Mammary epithelial cell (primary cell): ENCODE measurements at regions of chr14 and their contacts with region 1.

Region 1: DNA sequence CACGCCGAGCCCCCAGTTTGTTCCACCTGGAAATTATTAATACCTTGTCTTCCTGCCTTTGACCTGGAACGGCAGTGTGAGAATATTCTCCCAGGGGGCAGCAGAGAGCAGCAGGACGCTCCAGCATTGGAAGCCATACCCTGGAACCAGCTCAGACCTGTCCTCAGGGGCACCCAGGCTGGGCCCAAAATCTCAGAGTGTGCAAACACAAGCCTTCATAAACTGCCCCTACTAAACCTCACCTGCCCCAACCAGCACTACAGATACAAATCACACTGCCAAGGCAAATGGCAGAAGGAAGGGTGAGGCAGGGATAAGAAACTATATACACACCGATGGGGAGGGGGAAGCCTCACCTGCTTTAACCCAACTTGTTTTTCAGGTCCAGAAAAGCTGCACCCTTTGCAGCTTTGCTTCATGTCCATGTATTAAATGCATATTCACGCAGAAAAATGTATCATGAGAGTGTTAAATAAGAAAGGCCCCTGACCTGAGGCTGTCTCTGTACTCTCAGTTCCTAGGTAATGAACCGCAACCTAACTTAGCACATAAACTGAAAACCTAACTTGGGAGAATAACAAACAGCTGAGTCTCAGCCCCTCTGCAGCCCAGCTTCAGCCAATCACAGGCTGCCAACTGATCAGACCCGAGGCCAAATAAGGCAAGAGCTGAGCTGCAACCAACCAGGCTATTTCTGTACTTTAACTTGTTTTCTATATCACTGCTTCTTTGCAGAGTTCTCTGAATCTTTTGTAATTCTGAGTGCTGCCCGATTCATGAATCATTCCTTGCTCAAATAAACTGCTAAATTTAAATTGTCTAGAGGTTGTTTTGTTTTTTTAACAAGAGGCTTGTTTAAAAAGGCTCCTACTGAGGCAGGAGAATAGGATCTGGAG is 130.1 kb downstream of the SPTSSA start:
- DNase-seq: peak; percentile 52
- H3K4me3 ChIP-seq: no peak overlapping the region
- H3K27ac ChIP-seq: no peak overlapping the region
- H3K4me1 ChIP-seq: peaks cover 6% of the 10 kb centered on the region
- H3K27me3 ChIP-seq: no peaks in the 10 kb centered on the region
- CTCF ChIP-seq: peak; percentile 80 to 89

Region 2: GRCh38 chr14:34461334-34462131 is 129.6 kb after region 1 on chr14:
- CTCF ChIA-PET with region 1: no interaction called
- dilution Hi-C with region 1: no loop called
- in situ Hi-C with region 1: no loop called
- intact Hi-C with region 1: loop called (anchors 1 kb)
- DNase-seq: peak; percentile 42
- H3K4me3 ChIP-seq: peak overlapping the region; percentile 72 to 77 (median 76)
- H3K27ac ChIP-seq: peak overlapping the region; percentile 77
- H3K4me1 ChIP-seq: peaks cover 8% of the 10 kb centered on the region
- H3K27me3 ChIP-seq: no peaks in the 10 kb centered on the region
- CTCF ChIP-seq: no peak

Region 3: DNA sequence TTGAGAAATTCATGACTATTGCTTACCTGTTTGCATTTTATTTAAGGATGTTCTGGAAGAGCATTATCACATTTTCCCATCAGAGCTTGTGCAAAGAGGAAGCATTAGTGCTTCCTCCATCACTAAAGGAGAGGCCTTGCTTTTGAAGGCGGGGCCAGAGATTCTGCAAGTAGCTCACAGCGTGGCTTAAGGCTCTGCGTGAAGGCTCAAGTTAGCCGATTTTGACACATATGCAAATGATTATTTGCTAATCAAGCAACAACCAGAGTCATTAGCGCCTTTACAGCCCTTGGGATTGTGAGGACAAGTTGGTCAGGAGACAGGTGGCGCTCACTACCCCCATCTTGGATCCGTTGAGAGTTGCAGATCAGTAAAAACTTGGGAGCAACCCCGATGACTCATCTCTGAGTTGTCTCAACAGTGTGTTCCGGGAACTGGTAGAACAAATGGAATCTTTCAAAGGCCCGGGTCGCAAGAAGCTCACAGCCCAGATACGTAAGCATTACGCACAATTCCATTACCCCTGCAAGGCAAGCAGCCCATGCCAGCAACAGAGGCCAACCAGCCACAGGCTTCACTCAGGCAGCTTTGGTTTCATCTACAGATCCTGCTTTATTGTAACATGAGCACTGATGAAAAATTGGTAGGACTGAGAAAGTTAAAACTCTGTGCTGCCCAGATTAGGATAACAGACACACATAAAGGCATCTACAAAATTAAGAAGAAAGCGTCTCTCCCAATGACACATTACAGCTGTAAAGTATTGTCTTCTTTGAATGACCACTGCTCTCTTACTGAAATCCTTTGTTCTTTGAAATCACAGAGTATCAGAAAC is 164.9 kb after region 1 on chr14:
- CTCF ChIA-PET with region 1: interaction called, 7 read pairs
- dilution Hi-C with region 1: no loop called
- in situ Hi-C with region 1: loop called (anchors 5 to 25 kb)
- intact Hi-C with region 1: loop called (anchors 1 kb)
- DNase-seq: peak; percentile 98
- H3K4me3 ChIP-seq: no peak overlapping the region
- H3K27ac ChIP-seq: peak overlapping the region; percentile 89
- H3K4me1 ChIP-seq: peaks cover 18% of the 10 kb centered on the region
- H3K27me3 ChIP-seq: no peaks in the 10 kb centered on the region
- CTCF ChIP-seq: peak; percentile 3 to 46

Region 4: GRCh38 chr14:34502494-34503225 is 170.7 kb after region 1 on chr14:
- CTCF ChIA-PET with region 1: interaction called, 6 read pairs
- dilution Hi-C with region 1: no loop called
- in situ Hi-C with region 1: loop called (anchors 5 to 25 kb)
- intact Hi-C with region 1: loop called (anchors 1 kb)
- DNase-seq: no peak
- H3K4me3 ChIP-seq: no peak overlapping the region
- H3K27ac ChIP-seq: no peak overlapping the region
- H3K4me1 ChIP-seq: peaks cover 2% of the 10 kb centered on the region
- H3K27me3 ChIP-seq: no peaks in the 10 kb centered on the region
- CTCF ChIP-seq: no peak

Region 5: GRCh38 chr14:34539407-34540180 is 207.6 kb after region 1 on chr14 and contains the start of gene EAPP:
- CTCF ChIA-PET with region 1: no interaction called
- dilution Hi-C with region 1: no loop called
- in situ Hi-C with region 1: no loop called
- intact Hi-C with region 1: loop called (anchors 5 kb)
- DNase-seq: peak; percentile 96
- H3K4me3 ChIP-seq: peak within 1 kb of the TSS; percentile 76 to 100 (median 97)
- H3K27ac ChIP-seq: peak within 1 kb of the TSS; percentile 99
- H3K4me1 ChIP-seq: peaks cover 14% of the 10 kb centered on the region
- H3K27me3 ChIP-seq: no peaks in the 10 kb centered on the region
- CTCF ChIP-seq: no peak
- total RNA-seq, gene EAPP: 26.7 to 30.7 TPM

Region 6: GRCh38 chr14:34733235-34733634 is 401.3 kb after region 1 on chr14:
- CTCF ChIA-PET with region 1: no interaction called
- dilution Hi-C with region 1: no loop called
- in situ Hi-C with region 1: no loop called
- intact Hi-C with region 1: no loop called
- DNase-seq: peak; percentile 65
- H3K4me3 ChIP-seq: no peak overlapping the region
- H3K27ac ChIP-seq: no peak overlapping the region
- H3K4me1 ChIP-seq: peaks cover 15% of the 10 kb centered on the region
- H3K27me3 ChIP-seq: no peaks in the 10 kb centered on the region
- CTCF ChIP-seq: no peak